ENCODE measurements at regions of chr14 and their contacts with region 1.

Region 1: GRCh38 chr14:75126679-75127473 is at the start of gene NEK9:
- H3K4me3 Mint-ChIP-seq: peak within 1 kb of the TSS; percentile 80
- H3K27ac Mint-ChIP-seq: peak within 1 kb of the TSS; percentile 96
- H3K4me1 Mint-ChIP-seq: peaks cover 47% of the 10 kb centered on the region
- H3K27me3 Mint-ChIP-seq: no peaks in the 10 kb centered on the region

Region 2: DNA sequence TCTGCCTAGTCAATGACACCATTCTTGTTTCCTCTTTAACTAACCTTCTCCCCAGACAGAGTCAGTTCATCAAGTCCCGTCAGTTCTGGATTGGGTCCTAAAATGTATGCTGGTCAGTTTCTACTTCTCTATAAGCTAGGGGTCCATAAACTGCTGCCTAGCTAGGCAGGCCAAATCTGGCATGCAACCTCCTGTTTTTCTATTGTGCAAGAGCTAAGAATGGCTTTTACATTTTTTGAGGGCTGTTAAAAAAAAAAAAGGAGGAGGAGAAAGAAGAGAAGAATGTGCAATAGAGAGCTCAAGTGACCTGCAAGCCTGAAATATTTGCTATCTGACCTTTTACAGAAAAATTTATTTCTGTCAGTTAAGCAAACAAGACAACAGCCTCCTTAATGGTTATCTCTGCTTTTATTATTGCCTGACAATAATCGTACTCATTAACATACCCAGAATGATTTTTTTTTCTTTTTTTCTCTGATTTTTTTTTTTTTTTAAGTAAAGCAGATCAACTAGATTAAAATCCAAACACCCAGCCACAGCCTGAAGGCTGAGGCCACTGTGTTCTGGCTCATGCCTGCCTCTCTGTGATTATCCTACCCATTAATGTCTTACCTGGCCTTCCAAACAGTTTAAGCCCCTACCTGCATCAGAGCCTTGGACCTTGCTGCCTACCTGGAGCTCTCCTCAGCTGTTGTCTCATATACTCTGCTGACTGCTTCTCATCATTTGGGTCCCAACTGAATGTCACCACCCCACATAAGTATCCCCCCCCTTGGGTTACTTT is 56.2 kb after region 1 on chr14:
- intact Hi-C with region 1: no loop called
- H3K4me3 Mint-ChIP-seq: no peak overlapping the region
- H3K27ac Mint-ChIP-seq: peak overlapping the region; percentile 74
- H3K4me1 Mint-ChIP-seq: peaks cover 47% of the 10 kb centered on the region
- H3K27me3 Mint-ChIP-seq: peaks cover 4% of the 10 kb centered on the region

Region 3: GRCh38 chr14:75487155-75487671 is 360.3 kb after region 1 on chr14:
- intact Hi-C with region 1: loop called (anchors 2 kb)
- H3K4me3 Mint-ChIP-seq: no peak overlapping the region
- H3K27ac Mint-ChIP-seq: no peak overlapping the region
- H3K4me1 Mint-ChIP-seq: peaks cover 5% of the 10 kb centered on the region
- H3K27me3 Mint-ChIP-seq: no peaks in the 10 kb centered on the region

Measured in dendritic cell treated with granulocyte-macrophage colony-stimulating factor and Interleukin-4, amounts not matched to agents 40 ng/mL and 50 ng/mL, for 4 days (primary cell).